ENCODE measurements at regions of chr4 and their contacts with region 1.

Region 1: DNA sequence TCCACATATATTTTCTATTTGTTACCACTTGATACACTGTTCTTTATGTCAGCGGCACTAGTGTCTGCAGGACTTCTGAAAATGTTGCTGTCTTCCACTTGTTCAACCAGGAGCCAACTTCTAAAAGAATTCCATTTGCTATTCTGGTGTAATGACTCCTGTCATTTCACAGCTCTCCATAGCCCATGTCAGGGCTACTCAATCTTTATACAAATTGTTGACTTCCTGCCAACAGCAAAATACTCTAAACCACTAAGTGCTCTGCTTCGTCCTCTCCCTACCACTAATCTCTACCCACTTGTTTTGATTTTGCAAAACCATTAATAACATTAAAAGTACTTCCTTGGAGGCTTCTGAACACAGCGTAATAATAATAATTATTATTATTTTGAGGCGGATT is 7.2 kb downstream of the CTSO start:
- DNase-seq: no peak
- ATAC-seq: no peak
- H3K4me3 ChIP-seq: no peak overlapping the region
- H3K27ac ChIP-seq: no peak overlapping the region
- H3K4me1 ChIP-seq: no peaks in the 10 kb centered on the region
- H3K27me3 ChIP-seq: no peaks in the 10 kb centered on the region
- CTCF ChIP-seq: no peak

Region 2: GRCh38 chr4:155017426-155017825 is 929.1 kb before region 1 on chr4:
- CTCF ChIA-PET with region 1: no interaction called
- POLR2A ChIA-PET with region 1: interaction called, 15 read pairs
- in situ Hi-C with region 1: no loop called
- intact Hi-C with region 1: no loop called
- DNase-seq: no peak
- ATAC-seq: no peak
- H3K4me3 ChIP-seq: no peak overlapping the region
- H3K27ac ChIP-seq: no peak overlapping the region
- H3K4me1 ChIP-seq: no peaks in the 10 kb centered on the region
- H3K27me3 ChIP-seq: no peaks in the 10 kb centered on the region
- CTCF ChIP-seq: no peak

Region 3: DNA sequence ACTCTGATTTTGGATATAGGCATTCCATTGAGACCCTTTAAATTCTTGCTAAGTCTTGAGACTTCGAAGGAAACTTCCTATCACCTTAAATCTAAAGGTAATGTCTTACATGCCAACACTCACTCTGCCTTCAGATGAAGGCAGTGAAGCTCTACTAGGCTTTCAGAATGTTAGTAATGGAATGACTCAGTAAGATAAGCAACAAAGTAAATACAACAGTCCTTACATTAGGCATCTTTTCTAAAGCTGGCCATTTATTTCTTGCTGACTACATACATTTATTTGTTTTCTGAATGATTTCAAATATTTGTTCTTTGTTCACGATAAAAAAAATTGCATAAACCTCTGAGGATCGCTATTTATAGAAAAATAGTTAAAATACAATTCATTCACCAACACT is 123.9 kb before region 1 on chr4:
- CTCF ChIA-PET with region 1: no interaction called
- POLR2A ChIA-PET with region 1: no interaction called
- in situ Hi-C with region 1: no loop called
- intact Hi-C with region 1: loop called (anchors 5 kb)
- DNase-seq: no peak
- ATAC-seq: peak; percentile 84
- H3K4me3 ChIP-seq: no peak overlapping the region
- H3K27ac ChIP-seq: no peak overlapping the region
- H3K4me1 ChIP-seq: no peaks in the 10 kb centered on the region
- H3K27me3 ChIP-seq: no peaks in the 10 kb centered on the region
- CTCF ChIP-seq: no peak

Region 4: DNA sequence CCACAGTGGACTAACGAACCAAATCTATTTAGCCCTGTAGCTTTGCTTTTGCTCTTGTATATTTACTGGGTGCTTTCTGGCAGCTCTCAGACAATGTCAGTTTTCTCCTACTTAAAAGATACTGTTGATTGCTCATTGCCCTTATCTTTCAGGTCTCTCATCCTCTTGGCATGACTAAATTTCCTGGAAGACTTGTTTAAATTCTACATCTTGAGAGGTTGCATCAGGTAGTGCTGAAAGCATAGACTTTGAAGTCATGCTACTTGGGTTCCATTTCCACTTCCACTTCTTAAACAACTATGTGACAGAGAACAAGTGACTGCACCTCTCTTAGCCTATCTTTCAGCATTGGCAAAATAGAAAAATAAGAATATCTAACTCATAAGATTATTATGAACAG is 34.6 kb before region 1 on chr4:
- CTCF ChIA-PET with region 1: no interaction called
- POLR2A ChIA-PET with region 1: no interaction called
- in situ Hi-C with region 1: no loop called
- intact Hi-C with region 1: no loop called
- DNase-seq: no peak
- ATAC-seq: no peak
- H3K4me3 ChIP-seq: no peak overlapping the region
- H3K27ac ChIP-seq: no peak overlapping the region
- H3K4me1 ChIP-seq: no peaks in the 10 kb centered on the region
- H3K27me3 ChIP-seq: no peaks in the 10 kb centered on the region
- CTCF ChIP-seq: no peak